PC-9 (cell line): ENCODE measurements at regions of chr7 and their contacts with region 1.

Region 1: DNA sequence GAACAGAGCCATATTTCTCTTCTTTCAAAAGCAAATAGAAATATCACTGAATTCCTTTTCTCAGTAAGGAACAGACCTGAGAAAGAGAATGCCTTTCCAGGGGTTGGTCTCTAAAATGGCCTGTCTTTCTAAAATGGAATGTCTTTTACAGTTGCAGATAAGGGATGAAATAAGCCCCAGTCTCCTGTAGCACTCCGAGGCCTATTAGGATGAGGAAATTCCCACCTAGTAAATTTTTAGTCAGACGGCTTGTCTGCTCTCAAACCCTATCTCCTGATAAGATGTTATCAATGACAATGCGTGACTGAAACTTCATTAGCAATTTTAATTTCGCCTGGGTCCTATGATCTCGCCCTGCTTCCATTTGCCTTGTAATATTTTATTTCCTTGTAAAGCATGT is 2.9 kb upstream of the EFCAB10 start:
- DNase-seq: no peak
- H3K4me3 ChIP-seq: no peak overlapping the region
- H3K27ac ChIP-seq: no peak overlapping the region
- H3K4me1 ChIP-seq: no peaks in the 10 kb centered on the region
- H3K27me3 ChIP-seq: no peaks in the 10 kb centered on the region
- CTCF ChIP-seq: no peak

Region 2: DNA sequence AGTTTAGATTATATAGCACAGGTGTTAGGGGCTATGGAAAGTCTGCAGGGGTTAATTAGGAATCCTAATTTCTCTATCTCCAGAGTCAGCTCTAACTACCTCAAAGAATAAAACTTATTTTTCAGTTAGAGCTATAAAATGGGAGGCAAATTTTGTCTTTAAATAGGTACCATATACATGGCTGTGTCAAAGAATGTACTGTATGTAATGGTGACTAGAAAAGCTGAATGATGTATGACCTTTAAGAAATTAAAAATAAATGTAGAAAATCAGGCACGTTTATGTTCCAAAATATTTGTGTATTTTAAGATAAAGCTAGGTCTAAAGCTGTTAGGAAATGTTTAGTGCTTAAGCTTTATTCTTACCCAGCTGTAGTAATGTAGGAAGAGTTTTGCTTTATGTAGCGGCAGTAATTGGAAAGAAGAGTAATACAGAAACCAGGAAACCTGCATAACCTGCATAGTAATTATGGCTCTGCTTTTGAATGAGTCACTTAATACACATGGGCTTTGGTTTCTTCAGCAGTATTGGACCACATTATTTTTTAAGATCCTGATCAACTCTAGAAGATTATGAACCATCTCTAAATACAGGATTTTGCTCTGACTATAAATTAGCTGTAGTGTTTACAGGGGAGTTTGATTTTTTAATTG is 485.2 kb before region 1 on chr7:
- CTCF ChIA-PET with region 1: interaction called, 15 read pairs
- POLR2A ChIA-PET with region 1: no interaction called
- intact Hi-C with region 1: no loop called
- DNase-seq: peak in 1 of 2 experiments; percentile 75
- H3K4me3 ChIP-seq: no peak overlapping the region
- H3K27ac ChIP-seq: peak overlapping the region; percentile 60
- H3K4me1 ChIP-seq: peaks cover 7% of the 10 kb centered on the region; the same call in 1 of the 2 replicates
- H3K27me3 ChIP-seq: no peaks in the 10 kb centered on the region
- CTCF ChIP-seq: no peak